Heart right ventricle (tissue), 16 donors: ENCODE measurements at regions of chr6 and their contacts with region 1.

Region 1: DNA sequence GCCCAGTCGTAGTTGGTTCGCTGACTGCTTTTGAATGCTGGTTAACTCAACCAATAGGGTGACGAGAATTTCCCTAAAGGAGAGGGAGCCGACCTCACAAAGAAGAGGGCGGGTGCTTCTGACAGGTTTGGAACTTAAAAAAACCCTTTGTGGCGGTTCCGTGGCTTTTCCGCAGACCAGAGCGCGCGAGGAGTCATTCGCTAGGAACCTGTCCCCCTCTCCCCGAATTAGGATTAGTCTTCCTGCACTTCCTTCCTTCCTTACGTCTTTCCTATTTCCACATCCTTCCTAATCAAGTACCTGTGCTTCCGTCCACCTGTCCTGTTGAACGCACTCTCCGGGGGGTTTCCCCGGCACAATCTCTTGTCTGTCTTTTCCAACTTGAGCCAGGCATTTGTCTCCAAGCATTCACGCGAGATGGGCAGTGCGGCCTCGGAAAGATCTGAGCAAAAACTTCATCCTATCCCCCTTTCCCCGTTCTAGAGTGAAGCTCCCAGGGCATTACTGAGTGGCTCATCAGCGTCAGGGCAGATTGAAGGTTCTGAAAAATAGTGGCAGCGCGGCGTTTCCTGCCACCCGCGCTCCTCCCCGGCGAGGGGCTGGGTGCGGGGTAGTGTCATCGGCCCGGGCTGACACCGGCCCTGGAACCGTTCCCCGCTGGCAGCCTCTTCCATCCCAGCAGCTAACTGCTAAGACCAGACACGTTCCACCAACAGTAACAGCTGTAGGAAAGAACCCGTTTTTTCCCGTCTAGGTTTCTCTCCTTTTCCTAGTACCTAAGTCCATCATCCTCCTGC is 1.5 kb upstream of the STXBP5 start:
- DNase-seq: peak; percentile 53 to 94
- ATAC-seq: peak; percentile 93 to 98 (median 95)
- H3K4me3 ChIP-seq: peak overlapping the region; percentile 36 to 92 (median 83)
- H3K27ac ChIP-seq: peak overlapping the region; percentile 87 to 97 (median 94)
- H3K4me1 ChIP-seq: peaks cover 0 to 35% (median 25%) of the 10 kb centered on the region in 9 donors
- H3K27me3 ChIP-seq: no peaks in the 10 kb centered on the region
- CTCF ChIP-seq: no peak

Region 2: DNA sequence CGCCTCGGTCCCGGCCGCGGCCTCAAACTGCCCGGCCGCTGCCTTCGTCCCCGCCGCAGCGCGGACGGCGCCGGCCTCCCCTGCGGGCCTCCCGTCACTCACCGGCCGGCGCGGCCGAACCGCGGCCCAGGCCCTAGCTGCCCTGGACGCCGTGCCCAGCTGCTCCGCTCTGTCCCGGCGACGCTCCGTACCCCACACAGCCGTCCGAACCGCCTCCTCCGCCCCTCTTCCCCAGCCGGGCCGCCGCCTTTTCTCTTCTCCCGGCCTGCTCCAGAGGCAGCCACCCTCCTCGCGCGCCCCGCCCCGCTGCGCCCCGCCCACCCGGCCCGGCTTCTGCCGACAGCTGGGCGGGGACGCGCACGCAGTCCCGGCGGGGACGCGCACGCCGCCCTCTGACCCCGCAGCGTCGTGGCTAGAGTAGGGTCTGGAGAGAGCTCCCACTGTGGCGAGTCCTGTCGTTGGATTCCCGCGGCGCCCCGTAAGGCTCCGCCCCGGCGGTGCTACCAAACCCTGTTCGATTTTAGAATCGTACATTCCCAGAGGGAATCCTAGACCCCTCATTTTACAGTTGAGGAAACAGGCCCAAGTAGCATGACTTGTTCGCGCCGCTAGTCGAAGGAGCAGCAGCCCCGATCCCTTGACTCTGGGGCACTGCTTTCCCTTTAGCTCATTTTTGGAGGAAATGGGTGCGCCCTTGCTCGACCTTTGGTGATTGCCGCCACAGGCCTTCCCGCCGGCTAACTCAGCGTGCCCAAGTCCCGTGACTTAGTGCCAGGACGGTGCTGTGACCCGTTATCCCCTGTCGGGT is 1388.0 kb before region 1 on chr6 and contains the start of gene FBXO30:
- intact Hi-C with region 1: loop called in 1 of 10 experiments (anchors 10 kb)
- DNase-seq: peak; percentile 89 to 92
- ATAC-seq: peak; percentile 97 to 99 (median 98)
- H3K4me3 ChIP-seq: peak within 1 kb of the TSS; percentile 63 to 87 (median 79)
- H3K27ac ChIP-seq: peak within 1 kb of the TSS; percentile 92 to 98 (median 95)
- H3K4me1 ChIP-seq: peaks cover 0 to 79% (median 57%) of the 10 kb centered on the region in 9 donors
- H3K27me3 ChIP-seq: no peaks in the 10 kb centered on the region
- CTCF ChIP-seq: peak in 4 of 9 donors; percentile 15 to 38 (median 26)
- total RNA-seq, gene FBXO30: 10.6 to 18.4 (median 14.2) TPM

Region 3: GRCh38 chr6:146543211-146543939 is 659.3 kb before region 1 on chr6 and contains the start of gene RAB32:
- intact Hi-C with region 1: loop called in 1 of 10 experiments (anchors 10 kb)
- DNase-seq: peak; percentile 93 to 94
- ATAC-seq: peak; percentile 98 to 100 (median 99)
- H3K4me3 ChIP-seq: peak within 1 kb of the TSS; percentile 77 to 86 (median 80)
- H3K27ac ChIP-seq: peak within 1 kb of the TSS; percentile 84 to 98 (median 96)
- H3K4me1 ChIP-seq: peaks cover 0 to 43% (median 30%) of the 10 kb centered on the region in 9 donors
- H3K27me3 ChIP-seq: no peaks in the 10 kb centered on the region
- CTCF ChIP-seq: peak; percentile 50 to 93 (median 82)
- total RNA-seq, gene RAB32: 1.6 to 14.5 (median 4.2) TPM

Region 4: DNA sequence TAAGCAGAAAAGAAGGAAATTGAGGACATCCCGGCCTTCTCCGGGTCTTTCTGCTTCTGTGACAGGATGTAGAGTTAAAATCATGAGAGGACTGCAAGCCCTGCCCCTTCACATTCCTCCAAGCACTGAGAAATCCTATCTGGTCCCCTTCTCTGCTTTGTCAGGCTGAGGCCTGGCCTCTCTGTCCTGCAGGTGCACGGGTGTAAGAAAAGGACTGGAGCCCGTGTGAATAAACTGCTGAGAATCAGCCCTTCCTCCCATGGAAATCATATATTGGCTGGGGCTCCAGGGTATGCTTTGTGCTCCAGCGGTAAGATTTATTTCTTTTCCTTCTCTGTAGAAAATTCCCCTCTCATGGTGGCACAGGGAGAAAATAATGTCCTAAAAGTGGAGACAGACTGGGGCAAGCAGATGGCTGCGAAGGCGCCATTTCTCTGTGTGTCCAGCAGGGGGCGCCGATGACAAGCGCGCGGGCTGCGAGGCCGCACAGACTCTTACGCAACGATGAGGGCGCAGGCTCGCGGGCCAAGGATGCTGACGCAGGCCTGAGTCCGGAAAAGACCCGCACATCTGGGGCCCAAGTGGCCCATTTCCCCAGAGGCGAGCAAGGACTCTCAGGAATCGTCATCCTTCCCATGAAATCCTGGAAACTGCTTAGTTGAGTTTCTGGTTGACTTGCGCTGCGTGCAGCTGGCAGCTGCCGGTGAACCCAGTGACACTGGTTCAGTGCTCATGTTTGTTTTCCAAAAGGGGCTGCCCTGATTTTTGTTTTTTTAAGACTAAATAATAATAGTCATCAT is 345.3 kb before region 1 on chr6:
- intact Hi-C with region 1: loop called in 5 of 10 experiments (anchors 2 to 10 kb)
- DNase-seq: peak; percentile 75 to 84
- ATAC-seq: peak; percentile 95 to 98 (median 96)
- H3K4me3 ChIP-seq: peak overlapping the region in 9 of 10 donors; percentile 14 to 56 (median 43)
- H3K27ac ChIP-seq: peak overlapping the region in 9 of 10 donors; percentile 30 to 79 (median 59)
- H3K4me1 ChIP-seq: peaks cover 0 to 9% (median 0%) of the 10 kb centered on the region in 9 donors
- H3K27me3 ChIP-seq: no peaks in the 10 kb centered on the region
- CTCF ChIP-seq: peak in 8 of 9 donors; percentile 98 to 99 (median 98)

Region 5: GRCh38 chr6:146913842-146914488 is 288.7 kb before region 1 on chr6:
- intact Hi-C with region 1: loop called in 2 of 10 experiments (anchors 10 kb)
- DNase-seq: peak; percentile 39 to 51
- ATAC-seq: peak; percentile 86 to 96 (median 92)
- H3K4me3 ChIP-seq: peak overlapping the region in 7 of 10 donors; percentile 14 to 33 (median 29)
- H3K27ac ChIP-seq: peak overlapping the region; percentile 34 to 82 (median 58)
- H3K4me1 ChIP-seq: peaks cover 0 to 42% (median 15%) of the 10 kb centered on the region in 9 donors
- H3K27me3 ChIP-seq: no peaks in the 10 kb centered on the region
- CTCF ChIP-seq: no peak

Region 6: DNA sequence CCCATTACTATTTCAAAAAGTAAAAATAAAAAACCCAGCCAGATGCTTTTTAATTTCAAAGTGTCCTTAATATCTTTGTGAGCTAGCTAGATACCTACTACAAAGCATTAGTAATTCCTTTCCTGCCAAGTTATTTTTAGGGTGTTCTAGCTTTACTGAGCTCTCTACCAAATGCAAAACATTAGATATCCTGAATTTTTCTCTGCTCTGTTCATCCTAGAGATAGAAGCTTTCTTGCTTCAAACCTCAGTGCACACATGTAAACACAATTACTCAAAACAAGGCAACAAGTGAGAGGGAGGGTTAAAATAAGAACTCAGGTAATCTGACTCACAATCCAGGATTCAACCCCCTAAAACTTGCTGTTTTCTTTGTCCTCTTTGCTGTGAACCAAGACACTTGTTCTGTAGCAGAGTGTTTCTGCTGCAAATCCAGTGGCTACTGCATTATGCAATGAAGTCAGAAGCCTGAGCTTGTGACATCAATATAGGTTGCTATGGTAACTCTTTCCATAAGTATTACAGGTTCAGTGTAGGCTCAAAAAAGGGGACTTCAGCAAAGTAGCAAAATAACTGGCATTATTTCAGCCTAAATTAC is 71.1 kb before region 1 on chr6:
- intact Hi-C with region 1: loop called in 1 of 10 experiments (anchors 5 kb)
- DNase-seq: no peak
- ATAC-seq: no peak
- H3K4me3 ChIP-seq: no peak overlapping the region
- H3K27ac ChIP-seq: peak overlapping the region in 1 of 10 donors; percentile 10
- H3K4me1 ChIP-seq: peaks cover 0 to 17% (median 8%) of the 10 kb centered on the region in 9 donors
- H3K27me3 ChIP-seq: no peaks in the 10 kb centered on the region
- CTCF ChIP-seq: no peak

Region 7: GRCh38 chr6:147390909-147391536 is 188.3 kb after region 1 on chr6:
- intact Hi-C with region 1: no loop called
- DNase-seq: no peak
- ATAC-seq: no peak
- H3K4me3 ChIP-seq: no peak overlapping the region
- H3K27ac ChIP-seq: no peak overlapping the region
- H3K4me1 ChIP-seq: no peaks in the 10 kb centered on the region
- H3K27me3 ChIP-seq: no peaks in the 10 kb centered on the region
- CTCF ChIP-seq: peak; percentile 10 to 63 (median 44)